ENCODE measurements at regions of chr2 and their contacts with region 1.

Region 1: DNA sequence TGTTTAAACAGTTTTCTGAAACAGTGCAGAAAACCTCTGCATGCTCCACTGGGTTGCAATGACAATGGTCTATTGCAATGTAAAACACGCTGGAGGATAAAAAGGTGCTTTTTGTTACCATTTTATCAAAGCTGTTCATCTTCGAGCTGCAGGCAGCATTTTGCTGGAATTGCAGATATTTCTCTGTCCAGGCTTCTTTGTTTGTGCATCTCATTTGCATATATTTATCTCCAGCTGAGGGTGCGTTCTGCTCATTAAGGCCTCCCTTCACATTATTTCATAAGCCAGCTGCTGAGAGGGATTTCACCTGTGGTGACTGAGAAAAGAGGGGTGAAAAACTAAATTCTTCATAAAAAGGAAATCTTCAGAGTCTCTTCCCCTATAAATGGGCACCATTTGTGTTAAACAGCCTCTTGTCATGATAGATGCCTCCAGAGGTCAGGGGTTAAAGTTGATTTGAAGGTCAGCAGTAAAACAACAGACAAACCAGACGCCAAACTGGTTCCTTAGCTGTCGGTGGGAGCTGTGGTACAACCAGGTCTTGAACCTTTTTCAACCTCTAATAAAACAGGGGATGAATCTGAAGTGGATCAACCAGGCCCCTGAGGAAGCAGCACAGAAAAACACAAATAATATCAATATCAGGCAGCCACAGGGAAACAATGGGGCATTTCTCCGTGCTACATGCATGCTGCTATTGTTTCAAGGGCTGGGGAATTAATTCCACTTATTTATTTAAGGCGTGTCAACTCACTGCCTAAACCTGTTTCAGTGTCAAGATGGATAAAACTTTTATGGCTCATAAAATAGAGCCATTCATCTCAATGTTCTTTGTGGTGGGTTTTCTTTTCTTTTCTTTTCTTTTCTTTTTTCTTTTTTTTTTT is 265.1 kb downstream of the MEIS1 start:
- DNase-seq: no peak

Region 2: GRCh38 chr2:66675591-66675990 is 24.4 kb before region 1 on chr2:
- intact Hi-C with region 1: no loop called
- DNase-seq: no peak

Region 3: DNA sequence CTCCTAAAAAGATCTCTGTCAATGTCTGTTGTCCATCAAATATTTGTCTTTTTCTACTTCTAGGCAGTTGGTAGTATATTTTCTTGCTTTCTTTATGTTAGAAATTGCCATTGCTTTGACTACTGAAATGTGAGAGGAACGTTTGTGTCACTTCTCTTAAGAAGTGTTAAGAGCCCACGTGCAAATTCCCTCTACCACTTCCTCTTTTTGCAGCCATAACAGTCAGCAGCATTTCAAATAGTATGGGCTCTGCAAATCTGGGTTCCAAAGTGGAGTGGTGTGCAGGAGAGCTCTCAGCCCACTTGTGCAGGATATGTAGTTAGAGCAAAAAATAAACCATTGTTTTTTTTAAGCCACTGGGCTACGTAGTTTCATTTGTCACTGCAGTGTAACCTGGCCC is 48.9 kb after region 1 on chr2:
- intact Hi-C with region 1: no loop called
- DNase-seq: no peak

Region 4: GRCh38 chr2:66851449-66851872 is 151.4 kb after region 1 on chr2:
- intact Hi-C with region 1: loop called in 1 of 2 experiments (anchors 5 kb)
- DNase-seq: no peak

Measured in posterior vena cava (tissue), 2 donors.